ENCODE measurements at regions of chr3 and their contacts with region 1.

Region 1: GRCh38 chr3:117019082-117019713 is 309.6 kb downstream of the TUSC7 start:
- DNase-seq: peak; percentile 65
- H3K4me3 Mint-ChIP-seq: no peak overlapping the region
- H3K27ac Mint-ChIP-seq: no peak overlapping the region
- H3K4me1 Mint-ChIP-seq: peaks cover 8% of the 10 kb centered on the region
- H3K27me3 Mint-ChIP-seq: peaks cover 15% of the 10 kb centered on the region
- CTCF ChIP-seq: peak; percentile 57

Region 2: GRCh38 chr3:116640109-116640508 is 379.1 kb before region 1 on chr3:
- CTCF ChIA-PET with region 1: no interaction called
- intact Hi-C with region 1: no loop called
- DNase-seq: no peak
- H3K4me3 Mint-ChIP-seq: no peak overlapping the region
- H3K27ac Mint-ChIP-seq: no peak overlapping the region
- H3K4me1 Mint-ChIP-seq: no peaks in the 10 kb centered on the region
- H3K27me3 Mint-ChIP-seq: peaks cover 22% of the 10 kb centered on the region
- CTCF ChIP-seq: no peak

Region 3: DNA sequence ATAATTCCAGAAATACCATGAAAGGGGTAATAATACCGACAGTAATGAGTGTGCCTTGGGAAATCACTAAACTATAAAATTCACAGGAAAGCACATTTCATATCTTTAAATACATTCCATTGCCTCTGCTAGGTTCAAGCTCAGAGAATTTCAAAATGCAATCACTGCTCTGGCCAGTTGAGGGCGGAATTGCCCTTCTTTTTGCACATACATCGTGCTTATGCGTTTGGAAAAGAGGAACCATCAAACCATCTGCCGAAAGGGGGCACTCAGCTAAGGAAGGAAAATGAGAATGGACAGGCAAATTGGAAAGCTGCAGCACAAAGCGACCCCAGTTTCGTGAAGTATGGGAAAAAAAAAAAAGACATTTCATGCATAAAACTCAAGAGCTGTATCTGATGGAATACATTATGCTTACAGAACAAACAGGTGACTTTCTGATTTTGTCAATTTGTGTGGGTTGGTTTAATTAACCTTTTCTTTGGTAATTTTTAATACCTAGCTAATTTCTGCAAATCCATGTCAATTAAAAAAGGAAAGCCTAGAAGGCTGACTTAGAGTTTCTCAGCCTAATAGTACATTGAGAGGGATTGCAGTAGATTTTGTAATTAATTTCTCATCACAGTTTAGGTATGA is 248.3 kb before region 1 on chr3:
- CTCF ChIA-PET with region 1: interaction called, 7 read pairs
- intact Hi-C with region 1: loop called (anchors 10 kb)
- DNase-seq: peak; percentile 77
- H3K4me3 Mint-ChIP-seq: no peak overlapping the region
- H3K27ac Mint-ChIP-seq: no peak overlapping the region
- H3K4me1 Mint-ChIP-seq: no peaks in the 10 kb centered on the region
- H3K27me3 Mint-ChIP-seq: peaks cover 13% of the 10 kb centered on the region
- CTCF ChIP-seq: peak; percentile 83

Region 4: DNA sequence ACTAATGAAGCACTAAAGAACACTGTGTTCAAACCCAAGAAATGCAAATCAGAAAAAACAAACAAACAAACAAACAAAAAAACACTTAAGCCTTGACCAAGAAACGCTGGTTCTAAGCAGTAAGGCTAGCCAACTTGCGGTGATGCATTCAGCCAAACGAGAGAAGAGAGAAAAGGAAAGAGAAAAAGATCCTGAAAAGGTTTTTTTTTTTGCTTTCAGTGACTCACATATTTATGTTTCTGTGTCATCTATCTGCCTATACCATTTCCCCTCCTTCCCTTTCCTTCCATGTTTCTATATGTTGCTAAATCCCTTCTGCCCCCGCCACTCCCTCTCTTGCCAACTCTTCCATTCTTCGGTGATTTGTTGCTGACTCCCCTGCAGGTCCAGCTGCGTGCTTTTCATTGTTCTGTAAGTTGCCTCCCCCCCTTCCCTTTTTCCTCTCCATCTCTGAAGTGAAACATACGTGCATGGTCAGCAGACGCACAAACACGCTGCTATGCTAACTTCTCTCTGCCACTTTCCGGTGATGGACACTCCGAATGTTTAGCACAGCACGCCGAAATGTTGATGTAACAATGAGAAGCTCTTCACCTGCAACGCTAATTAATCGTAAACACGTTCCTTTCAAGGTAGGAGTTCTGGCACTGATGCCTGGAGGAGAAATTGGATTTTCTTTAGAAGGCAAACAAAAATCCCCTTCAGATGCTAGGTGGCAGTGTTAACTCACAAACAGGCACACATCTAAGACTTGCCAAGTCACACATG is 155.2 kb before region 1 on chr3:
- CTCF ChIA-PET with region 1: no interaction called
- intact Hi-C with region 1: loop called (anchors 5 kb)
- DNase-seq: peak; percentile 30
- H3K4me3 Mint-ChIP-seq: no peak overlapping the region
- H3K27ac Mint-ChIP-seq: no peak overlapping the region
- H3K4me1 Mint-ChIP-seq: no peaks in the 10 kb centered on the region
- H3K27me3 Mint-ChIP-seq: no peaks in the 10 kb centered on the region
- CTCF ChIP-seq: peak; percentile 21

Region 5: DNA sequence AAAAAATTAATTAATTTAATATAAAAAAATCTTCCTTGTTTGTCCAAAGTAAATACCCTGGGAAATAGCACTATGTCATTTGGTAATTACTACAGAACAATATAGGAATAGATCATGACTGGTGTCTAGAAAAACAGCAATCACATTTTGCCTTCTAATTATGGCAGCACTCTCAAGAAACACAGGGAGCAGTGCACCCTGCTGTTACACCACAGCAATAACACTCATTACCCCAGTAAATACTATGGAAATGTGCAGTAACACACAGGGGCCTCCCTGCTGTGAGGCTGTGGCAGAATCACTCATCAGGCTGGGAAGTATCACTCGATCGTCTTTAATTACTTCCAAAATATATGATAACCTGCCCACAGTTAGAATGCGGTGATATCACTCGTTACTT is 336.4 kb after region 1 on chr3:
- CTCF ChIA-PET with region 1: no interaction called
- intact Hi-C with region 1: loop called (anchors 1 kb)
- DNase-seq: peak; percentile 27
- H3K4me3 Mint-ChIP-seq: no peak overlapping the region
- H3K27ac Mint-ChIP-seq: no peak overlapping the region
- H3K4me1 Mint-ChIP-seq: no peaks in the 10 kb centered on the region
- H3K27me3 Mint-ChIP-seq: no peaks in the 10 kb centered on the region
- CTCF ChIP-seq: peak; percentile 32

Region 6: GRCh38 chr3:117439812-117440211 is 420.6 kb after region 1 on chr3:
- CTCF ChIA-PET with region 1: no interaction called
- intact Hi-C with region 1: no loop called
- DNase-seq: peak; percentile 24
- H3K4me3 Mint-ChIP-seq: no peak overlapping the region
- H3K27ac Mint-ChIP-seq: no peak overlapping the region
- H3K4me1 Mint-ChIP-seq: peaks cover 10% of the 10 kb centered on the region
- H3K27me3 Mint-ChIP-seq: no peaks in the 10 kb centered on the region
- CTCF ChIP-seq: peak; percentile 24

Region 7: DNA sequence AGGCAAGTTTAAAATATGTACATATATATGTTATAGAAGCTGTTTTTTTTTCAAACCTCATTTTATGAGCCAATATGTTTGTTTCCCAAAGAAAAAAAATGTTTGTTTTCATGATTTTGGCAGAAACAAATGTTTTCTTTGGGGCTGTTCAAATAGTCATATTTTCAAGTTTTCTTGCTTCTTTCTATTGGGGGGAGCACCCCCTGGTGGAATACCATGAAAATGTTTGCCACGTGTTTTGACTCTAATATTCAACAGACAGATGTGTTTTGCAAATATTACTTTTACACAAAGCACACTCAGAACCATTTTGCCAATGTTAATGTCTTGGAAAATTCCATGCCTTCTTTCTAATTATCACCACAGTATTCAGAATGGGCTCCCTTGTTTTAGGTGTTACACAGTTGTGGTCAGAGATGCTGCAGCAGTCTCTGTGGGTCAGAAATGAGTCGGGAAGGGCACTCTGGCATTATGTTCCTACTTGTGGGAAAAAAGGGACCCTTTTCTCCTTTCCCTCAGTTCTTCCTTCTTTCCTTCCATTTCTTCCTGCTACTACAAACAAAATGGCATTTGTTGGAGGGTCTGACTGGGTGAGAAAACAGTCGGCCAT is 507.4 kb after region 1 on chr3:
- CTCF ChIA-PET with region 1: no interaction called
- intact Hi-C with region 1: loop called (anchors 1 kb)
- DNase-seq: peak; percentile 49
- H3K4me3 Mint-ChIP-seq: no peak overlapping the region
- H3K27ac Mint-ChIP-seq: no peak overlapping the region
- H3K4me1 Mint-ChIP-seq: no peaks in the 10 kb centered on the region
- H3K27me3 Mint-ChIP-seq: no peaks in the 10 kb centered on the region
- CTCF ChIP-seq: no peak

Region 8: GRCh38 chr3:117719316-117719926 is 700.2 kb after region 1 on chr3:
- CTCF ChIA-PET with region 1: no interaction called
- intact Hi-C with region 1: loop called (anchors 1 kb)
- DNase-seq: peak; percentile 18
- H3K4me3 Mint-ChIP-seq: no peak overlapping the region
- H3K27ac Mint-ChIP-seq: no peak overlapping the region
- H3K4me1 Mint-ChIP-seq: no peaks in the 10 kb centered on the region
- H3K27me3 Mint-ChIP-seq: no peaks in the 10 kb centered on the region
- CTCF ChIP-seq: peak; percentile 37

Region 9: DNA sequence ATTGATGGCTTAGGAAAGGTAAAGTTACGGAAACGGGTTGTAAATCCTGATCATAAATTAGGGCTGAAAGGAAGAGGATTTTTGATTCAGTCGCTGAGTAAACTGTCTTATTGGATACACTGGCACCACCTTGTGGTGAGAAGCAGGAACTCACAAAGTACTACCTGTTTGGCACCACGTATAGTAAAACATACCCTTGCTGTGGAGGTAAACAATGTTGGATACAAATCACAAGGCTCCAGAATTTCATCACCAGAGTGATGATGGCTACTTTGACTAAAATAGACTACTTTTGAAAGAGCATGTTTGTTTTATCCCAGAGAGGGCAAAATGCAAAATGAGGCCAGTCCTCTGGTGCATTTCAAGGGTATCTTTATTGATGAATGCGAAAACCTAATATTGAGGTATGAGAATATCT is 1798.6 kb after region 1 on chr3:
- CTCF ChIA-PET with region 1: no interaction called
- intact Hi-C with region 1: loop called (anchors 5 kb)
- DNase-seq: peak; percentile 54
- H3K4me3 Mint-ChIP-seq: no peak overlapping the region
- H3K27ac Mint-ChIP-seq: no peak overlapping the region
- H3K4me1 Mint-ChIP-seq: no peaks in the 10 kb centered on the region
- H3K27me3 Mint-ChIP-seq: no peaks in the 10 kb centered on the region
- CTCF ChIP-seq: peak; percentile 73

Measured in Calu3 (cell line).